ENCODE measurements at regions of chr3 and their contacts with region 1.

Region 1: GRCh38 chr3:197511130-197511529 is 44.6 kb downstream of the BDH1 start:
- DNase-seq: peak in 2 of 42 donors; percentile 49 to 53

Region 2: DNA sequence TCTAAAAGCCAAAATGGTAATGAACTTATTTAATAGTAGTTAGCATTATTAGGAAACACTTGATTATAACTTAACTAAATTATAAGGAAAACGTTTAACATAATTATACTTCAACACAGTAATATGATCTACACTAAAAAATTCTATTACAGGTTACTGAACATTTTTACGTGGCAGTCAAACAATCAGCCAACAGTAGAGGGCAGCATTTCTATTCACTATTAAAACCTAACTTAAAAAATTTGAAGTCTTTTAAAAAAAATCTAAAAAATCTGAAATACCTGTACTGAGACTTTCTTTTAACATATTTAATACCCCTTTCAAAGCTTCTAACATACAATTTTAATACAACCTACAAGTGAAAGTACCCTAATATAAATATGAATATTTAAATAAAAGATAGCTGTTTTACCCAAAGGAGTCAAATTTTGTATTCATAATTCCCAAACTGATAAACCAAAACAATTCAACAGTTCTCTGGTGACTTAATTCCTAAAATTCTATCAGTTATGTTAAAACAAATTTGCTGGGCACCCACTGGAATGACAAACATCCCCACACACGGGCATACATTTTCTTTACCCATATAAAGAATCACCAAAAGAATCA is 254.2 kb before region 1 on chr3:
- intact Hi-C with region 1: loop called (anchors 2 kb)
- DNase-seq: peak in 19 of 42 donors; percentile 9 to 83 (median 52)

Region 3: GRCh38 chr3:197445896-197446711 is 65.0 kb before region 1 on chr3:
- intact Hi-C with region 1: no loop called
- DNase-seq: no peak

Region 4: DNA sequence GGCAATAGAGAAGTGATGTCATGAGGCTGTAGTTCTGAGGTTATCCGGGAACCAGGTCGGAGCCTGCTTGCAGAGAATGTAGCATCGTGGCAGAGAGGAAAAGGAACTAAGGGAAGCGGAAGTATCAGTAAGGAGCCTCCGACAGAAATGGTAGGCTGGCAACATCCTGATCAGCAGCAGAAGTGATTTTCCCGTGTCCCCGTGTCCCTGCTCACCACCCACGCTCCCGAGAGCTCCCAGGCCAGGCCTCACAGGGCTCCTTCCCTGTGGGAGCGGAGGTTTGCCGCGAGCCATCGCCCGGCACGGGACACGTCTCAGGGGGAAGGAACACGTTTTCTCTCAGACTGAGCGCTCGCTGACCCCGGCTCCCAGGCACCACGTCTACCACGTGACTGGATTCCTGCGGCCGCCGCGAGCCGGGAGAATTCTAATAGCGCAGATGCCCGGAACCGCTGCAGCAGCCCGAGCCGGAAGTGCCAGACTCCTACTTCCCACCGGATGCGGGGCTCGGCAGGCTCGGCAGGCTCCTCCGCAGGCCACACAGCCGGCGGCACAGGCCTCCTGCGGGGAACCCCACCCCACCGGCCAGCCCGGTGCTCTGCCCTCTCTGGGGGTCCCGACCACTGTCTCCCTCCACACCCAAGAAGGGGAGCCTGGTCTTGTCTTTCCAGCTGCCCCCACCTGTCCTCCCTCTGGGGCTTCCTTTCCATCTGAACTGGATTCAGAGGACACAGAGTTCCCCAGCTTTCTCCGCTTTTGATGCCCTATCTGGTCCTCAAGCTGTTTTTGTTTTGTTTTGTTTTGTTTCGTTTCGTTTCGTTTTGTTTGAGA is 54.7 kb before region 1 on chr3:
- intact Hi-C with region 1: loop called (anchors 5 kb)
- DNase-seq: peak; percentile 74 to 94 (median 86)

Region 5: DNA sequence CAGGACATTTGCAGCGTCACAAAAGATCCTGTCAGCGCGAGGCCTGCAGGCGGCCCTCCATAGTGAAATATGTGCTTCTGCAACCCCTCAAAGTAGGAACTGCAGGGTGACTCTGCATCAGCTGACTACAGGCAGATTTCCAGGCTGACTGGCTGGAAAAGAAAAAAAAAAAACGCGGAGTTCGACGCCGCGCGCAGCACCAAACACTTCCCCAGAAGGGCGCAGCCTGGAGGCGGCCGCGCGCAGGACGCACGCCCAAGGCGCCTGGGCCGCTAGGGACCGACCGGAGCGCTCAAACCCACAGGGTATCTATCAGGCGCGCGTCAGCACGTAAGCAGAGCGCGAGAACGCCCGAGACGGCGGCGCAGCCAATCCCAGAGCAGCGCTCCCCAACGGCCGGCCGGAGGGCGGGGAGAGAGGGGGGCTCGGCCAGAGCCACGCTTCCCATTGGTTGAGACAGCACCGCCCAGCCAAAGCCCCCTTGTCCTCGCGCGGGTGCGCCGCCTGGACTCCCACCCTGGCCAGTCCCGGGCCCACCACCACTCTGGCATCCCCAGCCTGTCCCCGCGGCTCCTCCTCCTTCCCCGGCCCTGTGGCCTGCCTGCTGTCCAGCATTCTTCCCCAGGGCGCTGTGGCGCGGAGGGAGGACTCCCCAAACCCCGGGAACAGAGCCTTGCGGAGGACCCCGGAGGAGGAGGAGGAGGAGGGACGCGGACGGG is 43.6 kb after region 1 on chr3:
- intact Hi-C with region 1: loop called (anchors 5 kb)
- DNase-seq: peak; percentile 93 to 99 (median 98)

Region 6: GRCh38 chr3:197567904-197568681 is 57.0 kb after region 1 on chr3:
- intact Hi-C with region 1: no loop called
- DNase-seq: peak in 10 of 42 donors; percentile 13 to 69 (median 35)